Activated T-helper 1 cell treated with anti-CD3 and anti-CD28 coated beads, Interleukin-12 subunit alpha, Interleukin-12 subunit beta, Interleukin-2, Interleukin-4 antibody, amounts not matched to agents 30 ng/mL and 10 ng/mL and 1 ng/mL, durations not matched to agents 14 hours and 24 hours and 36 hours (primary cell): ENCODE measurements at regions of chr1 and their contacts with region 1.

Region 1: DNA sequence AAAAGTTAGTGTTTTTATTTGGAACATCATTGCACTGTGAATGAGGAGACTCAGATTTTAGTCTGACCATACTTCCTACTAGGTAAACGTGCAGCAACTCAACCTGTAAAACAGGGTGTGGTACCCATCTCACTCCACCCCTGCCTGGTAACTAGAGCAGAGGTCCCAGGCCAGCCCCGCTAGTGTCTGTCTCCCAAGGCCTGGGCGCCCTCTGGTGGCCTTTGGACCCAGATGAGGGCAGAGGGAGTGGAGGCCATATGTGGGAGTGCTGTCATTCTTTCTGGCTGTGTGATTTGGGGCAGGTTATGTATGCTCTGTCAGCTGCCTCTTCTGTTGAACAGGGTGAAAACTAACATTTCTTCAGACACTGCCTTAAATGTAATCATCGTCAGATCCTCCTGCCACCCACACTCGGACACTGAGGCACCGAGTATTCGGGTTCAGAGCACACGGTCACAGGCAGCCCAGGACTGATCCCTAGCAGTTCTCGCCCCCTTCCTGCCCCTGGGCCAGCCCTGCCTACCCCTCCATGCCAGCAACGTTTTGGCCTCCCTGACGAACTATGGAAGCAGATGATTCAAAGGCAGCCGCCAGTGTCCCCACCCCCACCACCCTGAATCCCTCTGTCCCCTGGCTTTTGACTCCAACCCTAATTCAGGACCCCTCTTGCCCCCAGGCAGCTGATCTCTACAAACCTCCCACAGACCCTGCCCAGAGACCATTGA is 76.0 kb downstream of the CD247 start:
- DNase-seq: peak; percentile 79
- H3K4me3 Mint-ChIP-seq: no peak overlapping the region
- H3K27ac Mint-ChIP-seq: peak overlapping the region; percentile 61
- H3K4me1 Mint-ChIP-seq: peaks cover 78% of the 10 kb centered on the region
- H3K27me3 Mint-ChIP-seq: no peaks in the 10 kb centered on the region

Region 2: DNA sequence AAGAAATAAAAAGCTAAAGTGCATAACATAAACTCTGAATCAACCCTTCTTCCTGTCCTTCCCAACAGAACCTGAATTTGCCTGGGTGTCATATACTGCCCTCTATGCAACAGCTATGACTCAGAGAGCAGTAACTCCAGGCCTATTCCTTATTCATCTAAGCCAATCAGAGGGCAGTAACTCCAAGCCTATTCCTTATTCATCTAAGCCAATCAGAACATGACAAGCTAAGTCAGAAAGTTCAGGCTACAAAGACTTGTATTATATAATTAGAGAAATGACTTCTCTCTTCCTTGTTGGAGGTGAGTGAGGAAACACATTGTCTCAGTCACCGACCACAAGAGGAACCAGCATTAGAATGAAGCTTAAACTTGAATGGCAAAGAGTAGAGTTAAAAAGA is 540.0 kb before region 1 on chr1:
- intact Hi-C with region 1: loop called (anchors 10 kb)
- DNase-seq: no peak
- H3K4me3 Mint-ChIP-seq: no peak overlapping the region
- H3K27ac Mint-ChIP-seq: no peak overlapping the region
- H3K4me1 Mint-ChIP-seq: peaks cover 29% of the 10 kb centered on the region
- H3K27me3 Mint-ChIP-seq: peaks cover 12% of the 10 kb centered on the region

Region 3: GRCh38 chr1:167105271-167106118 is 336.8 kb before region 1 on chr1:
- intact Hi-C with region 1: loop called (anchors 10 kb)
- DNase-seq: no peak
- H3K4me3 Mint-ChIP-seq: peak overlapping the region; percentile 4
- H3K27ac Mint-ChIP-seq: no peak overlapping the region
- H3K4me1 Mint-ChIP-seq: peaks cover 66% of the 10 kb centered on the region
- H3K27me3 Mint-ChIP-seq: no peaks in the 10 kb centered on the region

Region 4: DNA sequence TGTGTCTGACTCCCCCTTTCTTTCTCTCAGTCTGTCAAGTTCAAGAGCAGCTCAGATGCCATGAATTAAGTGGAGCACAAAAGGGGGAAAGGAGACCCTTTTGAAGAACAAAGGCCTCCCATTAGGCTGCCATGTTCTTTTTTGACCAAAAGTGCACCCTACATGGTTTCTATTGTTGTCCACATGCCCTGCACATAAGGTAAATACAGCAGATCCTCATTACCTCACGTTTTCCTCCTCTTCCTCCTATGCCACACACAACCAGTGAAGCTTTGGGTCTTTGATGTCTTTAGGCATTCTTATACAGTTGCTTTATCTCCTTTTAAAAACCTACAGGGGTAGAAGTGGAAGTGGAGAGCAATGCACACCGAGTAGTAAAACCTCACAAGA is 173.9 kb before region 1 on chr1:
- intact Hi-C with region 1: loop called (anchors 1 kb)
- DNase-seq: no peak
- H3K4me3 Mint-ChIP-seq: no peak overlapping the region
- H3K27ac Mint-ChIP-seq: no peak overlapping the region
- H3K4me1 Mint-ChIP-seq: peaks cover 20% of the 10 kb centered on the region
- H3K27me3 Mint-ChIP-seq: no peaks in the 10 kb centered on the region

Region 5: DNA sequence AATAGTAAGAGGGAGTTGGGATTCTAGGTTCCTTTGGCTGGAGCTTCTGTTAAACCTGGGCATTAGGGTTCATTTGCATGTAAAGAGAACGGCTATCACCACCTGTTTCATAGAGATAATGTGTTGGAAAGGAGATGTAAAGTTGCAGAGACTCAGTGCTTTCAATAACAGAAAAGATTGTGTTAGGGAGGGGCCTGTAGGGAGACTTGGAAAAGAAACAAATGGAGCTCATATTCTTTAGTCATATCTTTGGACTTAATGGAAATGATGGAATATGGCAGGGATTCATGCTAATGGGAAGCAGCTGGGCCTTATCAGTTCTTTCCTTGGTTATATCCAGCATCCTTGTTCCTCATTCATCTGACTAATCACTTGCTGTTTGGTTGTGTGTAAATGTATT is 68.9 kb before region 1 on chr1:
- intact Hi-C with region 1: loop called (anchors 10 kb)
- DNase-seq: no peak
- H3K4me3 Mint-ChIP-seq: no peak overlapping the region
- H3K27ac Mint-ChIP-seq: no peak overlapping the region
- H3K4me1 Mint-ChIP-seq: no peaks in the 10 kb centered on the region
- H3K27me3 Mint-ChIP-seq: no peaks in the 10 kb centered on the region

Region 6: GRCh38 chr1:167423684-167424619 is 18.3 kb before region 1 on chr1:
- intact Hi-C with region 1: loop called (anchors 2 kb)
- DNase-seq: no peak
- H3K4me3 Mint-ChIP-seq: no peak overlapping the region
- H3K27ac Mint-ChIP-seq: no peak overlapping the region
- H3K4me1 Mint-ChIP-seq: peaks cover 9% of the 10 kb centered on the region
- H3K27me3 Mint-ChIP-seq: no peaks in the 10 kb centered on the region

Region 7: DNA sequence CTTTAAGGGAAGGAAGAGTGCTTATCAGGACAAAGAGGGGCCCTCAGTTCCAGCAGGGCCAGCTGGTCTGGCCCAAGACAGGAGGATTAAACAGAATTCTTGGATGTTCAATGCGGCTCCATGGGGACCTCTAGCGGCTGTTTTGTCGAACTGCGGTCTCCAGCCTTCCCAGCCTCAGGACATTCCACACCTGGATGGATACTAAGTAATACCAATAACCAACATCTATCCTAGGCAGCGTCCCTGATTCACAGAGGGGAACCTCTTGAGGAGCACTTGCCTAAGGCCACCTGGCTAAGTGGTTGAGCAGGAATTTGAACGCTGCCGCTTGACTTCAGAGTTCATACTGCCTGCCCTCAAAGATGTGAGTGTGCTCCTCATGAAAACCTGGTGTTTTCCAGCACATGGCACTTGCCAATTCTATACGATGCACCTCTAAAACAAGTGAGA is 91.6 kb after region 1 on chr1:
- intact Hi-C with region 1: loop called (anchors 1 kb)
- DNase-seq: peak; percentile 51
- H3K4me3 Mint-ChIP-seq: no peak overlapping the region
- H3K27ac Mint-ChIP-seq: no peak overlapping the region
- H3K4me1 Mint-ChIP-seq: peaks cover 5% of the 10 kb centered on the region
- H3K27me3 Mint-ChIP-seq: peaks cover 7% of the 10 kb centered on the region

Region 8: DNA sequence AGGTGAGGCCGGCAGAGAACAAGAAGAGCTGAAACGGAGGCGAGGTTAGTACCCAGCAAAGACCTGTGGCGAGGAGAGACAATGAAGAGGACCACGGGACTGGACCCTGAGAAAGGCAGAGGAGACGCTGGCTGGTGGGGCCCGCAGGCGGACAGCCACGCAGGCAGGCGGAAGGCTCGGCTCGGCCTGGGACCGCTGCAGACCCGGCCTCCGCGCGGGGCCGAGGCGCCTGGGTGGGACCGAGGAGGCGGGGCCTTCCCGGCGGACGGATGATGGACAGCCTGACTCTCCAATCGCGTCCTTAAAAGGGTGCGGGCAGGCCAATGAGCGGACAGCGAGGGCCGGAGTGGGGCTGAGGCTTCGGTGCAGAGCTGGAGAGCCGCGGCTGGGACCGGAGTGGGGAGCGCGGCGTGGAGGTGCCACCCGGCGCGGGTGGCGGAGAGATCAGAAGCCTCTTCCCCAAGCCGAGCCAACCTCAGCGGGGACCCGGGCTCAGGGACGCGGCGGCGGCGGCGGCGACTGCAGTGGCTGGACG is 279.4 kb after region 1 on chr1 and contains the start of gene MPZL1:
- intact Hi-C with region 1: no loop called
- DNase-seq: peak; percentile 92
- H3K4me3 Mint-ChIP-seq: peak within 1 kb of the TSS; percentile 95
- H3K27ac Mint-ChIP-seq: peak within 1 kb of the TSS; percentile 83
- H3K4me1 Mint-ChIP-seq: peaks cover 77% of the 10 kb centered on the region
- H3K27me3 Mint-ChIP-seq: no peaks in the 10 kb centered on the region
- total RNA-seq, gene MPZL1: 40.8 and 40.9 TPM in 2 replicates